ENCODE measurements at regions of chr3 and their contacts with region 1.

Region 1: DNA sequence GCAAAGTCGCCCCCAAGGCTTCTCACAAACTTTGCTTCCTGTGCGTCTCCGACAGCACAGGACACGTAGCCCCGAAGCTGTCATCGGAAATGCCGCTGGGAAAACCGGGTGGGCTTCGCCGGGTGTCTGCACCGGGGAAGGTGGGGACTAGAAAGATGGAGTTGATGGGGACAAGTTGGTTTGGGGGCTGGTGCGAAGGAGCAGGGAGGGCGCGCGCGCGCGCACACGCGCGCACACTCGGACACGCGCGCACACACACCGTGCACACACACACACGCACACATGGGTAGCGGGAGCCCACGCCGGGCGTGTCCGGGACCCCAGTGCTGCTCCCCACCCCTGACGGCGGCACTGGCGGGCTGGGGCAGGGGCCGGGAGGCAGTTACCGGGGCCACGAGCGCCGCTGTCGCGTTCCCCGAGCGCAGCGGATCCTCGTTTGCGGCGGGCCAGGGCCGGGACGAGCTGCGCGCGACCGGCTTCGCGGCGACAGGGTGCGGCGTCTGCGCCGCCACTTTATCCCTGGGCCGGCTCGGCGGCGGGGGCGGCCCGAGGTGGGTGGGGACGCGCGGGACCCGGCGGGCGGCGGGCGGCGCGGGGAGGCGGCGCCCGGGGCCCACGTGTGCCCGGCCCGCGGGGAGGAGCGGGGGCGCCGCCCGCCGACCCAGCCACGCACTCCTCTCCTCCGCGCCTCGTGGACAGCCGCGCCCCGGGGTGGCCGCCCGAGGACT is 547 bp upstream of the MGLL start:
- DNase-seq: peak in 3 of 5 donors; percentile 28 to 40 (median 35)
- H3K4me3 ChIP-seq: peak overlapping the region; percentile 41
- H3K27ac ChIP-seq: no peak overlapping the region
- H3K4me1 ChIP-seq: no peaks in the 10 kb centered on the region
- H3K27me3 ChIP-seq: no peaks in the 10 kb centered on the region
- CTCF ChIP-seq: no peak
- EP300 ChIP-seq: no peak
- POLR2A ChIP-seq: no peak

Region 2: GRCh38 chr3:127697551-127698240 is 125.2 kb before region 1 on chr3:
- intact Hi-C with region 1: loop called in 1 of 4 experiments (anchors 5 kb)
- DNase-seq: peak; percentile 62 to 81 (median 79)
- H3K4me3 ChIP-seq: no peak overlapping the region
- H3K27ac ChIP-seq: peak overlapping the region; percentile 57 to 72
- H3K4me1 ChIP-seq: peaks cover 13% of the 10 kb centered on the region
- H3K27me3 ChIP-seq: no peaks in the 10 kb centered on the region
- CTCF ChIP-seq: no peak
- EP300 ChIP-seq: peak; percentile 49
- POLR2A ChIP-seq: no peak

Region 3: DNA sequence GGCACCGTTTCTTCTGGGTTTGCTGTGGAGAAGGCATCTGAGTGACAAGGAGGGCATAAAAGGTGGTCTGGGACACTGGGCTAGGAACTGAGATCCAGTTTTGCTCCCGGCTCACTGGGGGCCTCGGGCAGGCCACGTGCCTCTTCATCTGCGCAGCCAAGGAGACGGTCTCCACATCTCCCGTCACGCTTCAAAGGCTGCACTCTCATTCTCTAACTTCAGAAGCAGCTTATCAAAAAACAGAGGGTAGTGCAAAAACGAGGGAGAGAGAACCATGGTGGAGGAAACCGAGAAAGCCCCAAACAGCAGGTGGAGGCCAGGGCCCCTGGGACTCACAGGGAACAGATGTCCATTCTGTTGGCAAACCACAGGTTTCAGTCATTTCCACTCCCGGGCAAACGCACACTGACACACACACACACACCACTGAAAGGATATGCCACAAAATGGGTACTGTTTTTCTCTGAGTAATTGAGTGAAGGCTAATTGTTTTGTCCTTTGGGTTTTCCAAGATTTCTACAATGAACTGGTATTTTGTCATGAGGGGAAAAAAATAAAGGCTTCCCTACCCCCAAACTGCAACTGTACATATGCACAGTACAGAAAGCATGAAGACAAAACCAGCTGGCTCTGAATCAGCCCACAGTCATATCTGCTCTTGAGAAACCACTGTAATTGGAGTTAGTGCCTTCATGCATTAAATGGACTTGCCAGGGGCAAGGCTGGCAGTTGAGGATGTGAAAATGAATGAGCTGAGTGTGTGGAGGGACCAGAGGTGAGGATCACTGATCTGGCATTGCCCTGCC is 72.4 kb before region 1 on chr3:
- intact Hi-C with region 1: loop called in 1 of 4 experiments (anchors 10 kb)
- DNase-seq: no peak
- H3K4me3 ChIP-seq: no peak overlapping the region
- H3K27ac ChIP-seq: no peak overlapping the region
- H3K4me1 ChIP-seq: peaks cover 6% of the 10 kb centered on the region
- H3K27me3 ChIP-seq: no peaks in the 10 kb centered on the region
- CTCF ChIP-seq: no peak
- EP300 ChIP-seq: no peak
- POLR2A ChIP-seq: no peak